Panc1 (cell line): ENCODE measurements at regions of chr10 and their contacts with region 1.

Region 1: GRCh38 chr10:79374312-79375191 is 27.3 kb downstream of the PPIF start:
- DNase-seq: peak; percentile 33
- ATAC-seq: peak; percentile 88
- H3K4me3 ChIP-seq: no peak overlapping the region
- H3K27ac ChIP-seq: no peak overlapping the region
- H3K4me1 ChIP-seq: no peaks in the 10 kb centered on the region
- H3K27me3 ChIP-seq: peaks cover 2% of the 10 kb centered on the region; the same call in 1 of the 2 replicates
- CTCF ChIP-seq: peak; percentile 98

Region 2: DNA sequence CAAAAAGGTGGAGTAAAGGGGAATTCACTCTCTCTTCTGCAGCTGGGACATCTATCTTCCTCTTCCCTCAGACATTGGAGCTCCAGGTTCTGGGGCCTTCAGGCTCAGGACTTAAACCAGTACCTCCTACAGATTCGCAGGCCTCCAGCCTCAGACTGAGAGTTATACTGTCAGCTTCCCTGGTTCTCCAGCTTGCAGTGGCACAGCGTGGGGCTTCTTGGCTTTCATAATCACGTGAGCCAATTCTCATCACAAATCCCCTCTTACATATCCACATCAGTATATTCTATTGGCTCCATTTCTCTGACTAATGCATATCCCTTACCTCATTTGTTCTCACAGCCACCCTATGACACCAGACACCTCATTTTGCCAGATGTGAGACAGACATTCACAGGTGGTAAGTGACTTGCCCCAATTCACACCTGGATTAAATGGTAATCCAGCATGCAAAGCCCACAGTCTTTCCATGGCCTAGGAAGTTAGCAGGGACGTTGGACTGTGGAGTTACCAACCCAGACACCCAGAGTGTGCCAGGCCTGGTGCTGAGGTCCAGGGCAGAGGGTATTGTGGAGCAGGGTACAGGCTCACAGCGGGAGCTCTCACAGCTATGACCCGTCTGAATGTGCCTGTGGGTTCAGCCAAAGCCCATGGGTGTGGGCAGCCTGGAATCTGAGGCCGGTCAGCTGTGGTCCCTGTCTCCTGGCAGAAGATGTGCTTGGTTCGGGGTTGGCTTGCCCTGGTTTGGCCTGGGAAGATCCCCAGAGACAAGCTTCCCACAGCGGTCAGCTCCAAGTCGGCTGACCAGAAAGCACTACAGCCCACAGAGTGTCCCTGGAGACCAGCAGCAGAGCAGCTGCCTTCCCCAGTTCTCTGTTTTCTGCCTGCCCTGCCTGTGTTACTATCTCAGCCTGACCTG is 89.3 kb after region 1 on chr10:
- CTCF ChIA-PET with region 1: interaction called, 9 read pairs
- POLR2A ChIA-PET with region 1: no interaction called
- in situ Hi-C with region 1: no loop called
- intact Hi-C with region 1: loop called (anchors 1 kb)
- DNase-seq: no peak
- ATAC-seq: no peak
- H3K4me3 ChIP-seq: no peak overlapping the region
- H3K27ac ChIP-seq: no peak overlapping the region
- H3K4me1 ChIP-seq: no peaks in the 10 kb centered on the region
- H3K27me3 ChIP-seq: peaks cover 12% of the 10 kb centered on the region
- CTCF ChIP-seq: no peak

Region 3: DNA sequence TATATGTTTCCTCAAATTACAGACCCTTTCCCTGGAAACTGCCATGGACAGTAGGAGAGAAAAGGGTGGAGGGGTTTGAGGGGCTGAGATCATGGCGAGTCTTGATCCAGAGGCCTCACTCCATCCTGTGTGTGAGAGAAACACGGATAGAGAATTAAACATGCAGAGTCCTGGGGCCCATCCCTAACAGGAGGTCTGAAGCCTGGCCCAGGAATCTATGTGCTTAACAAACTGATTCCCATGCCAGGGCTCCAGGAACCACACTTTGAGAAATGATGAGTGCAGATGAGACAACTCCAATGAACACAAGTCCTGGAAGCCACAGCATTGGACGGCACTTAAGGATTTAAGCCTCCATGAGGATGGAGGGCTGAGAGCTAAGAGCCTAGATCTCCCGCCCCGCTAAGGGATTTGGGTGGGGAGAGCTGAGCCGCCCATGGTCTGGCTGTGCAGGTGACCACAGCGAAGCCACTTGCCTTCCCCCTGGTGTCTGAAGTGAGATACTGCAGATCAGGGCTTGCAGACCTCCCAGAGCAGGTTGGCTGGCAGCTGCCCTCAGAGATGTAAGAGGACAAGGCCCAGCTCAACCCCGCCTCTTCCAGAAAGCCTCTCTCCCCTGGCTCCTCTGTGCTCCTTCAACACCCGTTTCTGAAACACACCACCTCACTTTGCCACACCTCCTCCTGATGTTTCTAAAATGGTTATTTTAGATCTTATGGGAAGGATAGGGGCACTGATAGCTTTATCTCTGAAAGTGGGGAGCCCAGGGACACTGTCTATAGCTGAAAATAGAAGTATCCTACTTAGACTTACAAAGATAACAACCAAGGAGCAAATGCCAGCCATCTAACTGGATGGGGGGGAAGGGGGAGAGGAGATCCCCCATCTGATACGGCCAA is 113.0 kb after region 1 on chr10:
- CTCF ChIA-PET with region 1: interaction called, 19 read pairs
- POLR2A ChIA-PET with region 1: no interaction called
- in situ Hi-C with region 1: no loop called
- intact Hi-C with region 1: loop called (anchors 5 kb)
- DNase-seq: peak; percentile 50
- ATAC-seq: peak; percentile 95
- H3K4me3 ChIP-seq: no peak overlapping the region
- H3K27ac ChIP-seq: no peak overlapping the region
- H3K4me1 ChIP-seq: no peaks in the 10 kb centered on the region
- H3K27me3 ChIP-seq: no peaks in the 10 kb centered on the region
- CTCF ChIP-seq: peak; percentile 85

Region 4: GRCh38 chr10:79502561-79503309 is 128.2 kb after region 1 on chr10:
- CTCF ChIA-PET with region 1: interaction called, 10 read pairs
- POLR2A ChIA-PET with region 1: no interaction called
- in situ Hi-C with region 1: no loop called
- intact Hi-C with region 1: no loop called
- DNase-seq: no peak
- ATAC-seq: peak; percentile 94
- H3K4me3 ChIP-seq: no peak overlapping the region
- H3K27ac ChIP-seq: no peak overlapping the region
- H3K4me1 ChIP-seq: no peaks in the 10 kb centered on the region
- H3K27me3 ChIP-seq: peaks cover 10% of the 10 kb centered on the region
- CTCF ChIP-seq: peak; percentile 78